ENCODE measurements at regions of chr12 and their contacts with region 1.

Region 1: DNA sequence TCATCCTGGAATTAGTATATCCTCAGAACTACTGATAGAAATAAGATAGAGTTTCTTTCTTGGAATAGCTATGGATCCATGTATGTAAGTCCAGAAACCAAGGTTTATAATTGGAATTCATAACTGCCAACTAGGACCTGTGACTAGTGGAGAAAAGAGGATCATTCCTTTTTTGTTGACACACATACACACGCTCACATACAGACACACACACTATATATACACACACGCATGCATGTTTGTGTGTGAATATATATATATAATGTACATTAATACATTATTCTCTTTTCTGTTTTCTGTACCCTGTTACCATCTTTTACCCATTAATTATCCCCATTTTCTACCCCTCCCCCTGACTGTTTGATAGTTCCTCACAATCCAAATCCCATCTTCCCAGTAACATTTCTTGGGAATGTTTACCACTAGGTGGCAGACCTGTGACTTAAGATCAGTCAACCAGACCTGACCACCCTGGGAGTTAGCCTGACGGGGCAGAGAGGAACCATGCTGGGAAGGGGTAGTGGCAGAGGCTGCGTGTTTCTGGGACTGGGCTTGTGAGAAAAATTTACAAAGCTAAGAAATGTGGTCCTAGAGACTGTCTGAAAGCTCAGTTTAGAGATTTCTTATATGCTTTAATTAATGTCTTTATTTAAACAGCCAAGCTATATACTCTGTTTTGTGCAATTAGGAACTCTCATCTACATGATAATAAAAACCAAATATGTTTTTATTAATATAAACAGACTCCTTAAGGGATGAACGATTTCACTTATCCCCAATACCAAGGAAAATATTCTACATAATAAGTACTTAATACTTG is 308.0 kb downstream of the PPFIA2 start:
- DNase-seq: peak in 3 of 10 donors; percentile 28 to 43 (median 39)
- H3K4me3 ChIP-seq: peak overlapping the region in 7 of 59 donors; percentile 1 to 44 (median 18)
- H3K27ac ChIP-seq: peak overlapping the region in 1 of 59 donors; percentile 18
- H3K27me3 ChIP-seq: no peaks in the 10 kb centered on the region
- CTCF ChIP-seq: peak; percentile 42 to 79 (median 66)

Region 2: DNA sequence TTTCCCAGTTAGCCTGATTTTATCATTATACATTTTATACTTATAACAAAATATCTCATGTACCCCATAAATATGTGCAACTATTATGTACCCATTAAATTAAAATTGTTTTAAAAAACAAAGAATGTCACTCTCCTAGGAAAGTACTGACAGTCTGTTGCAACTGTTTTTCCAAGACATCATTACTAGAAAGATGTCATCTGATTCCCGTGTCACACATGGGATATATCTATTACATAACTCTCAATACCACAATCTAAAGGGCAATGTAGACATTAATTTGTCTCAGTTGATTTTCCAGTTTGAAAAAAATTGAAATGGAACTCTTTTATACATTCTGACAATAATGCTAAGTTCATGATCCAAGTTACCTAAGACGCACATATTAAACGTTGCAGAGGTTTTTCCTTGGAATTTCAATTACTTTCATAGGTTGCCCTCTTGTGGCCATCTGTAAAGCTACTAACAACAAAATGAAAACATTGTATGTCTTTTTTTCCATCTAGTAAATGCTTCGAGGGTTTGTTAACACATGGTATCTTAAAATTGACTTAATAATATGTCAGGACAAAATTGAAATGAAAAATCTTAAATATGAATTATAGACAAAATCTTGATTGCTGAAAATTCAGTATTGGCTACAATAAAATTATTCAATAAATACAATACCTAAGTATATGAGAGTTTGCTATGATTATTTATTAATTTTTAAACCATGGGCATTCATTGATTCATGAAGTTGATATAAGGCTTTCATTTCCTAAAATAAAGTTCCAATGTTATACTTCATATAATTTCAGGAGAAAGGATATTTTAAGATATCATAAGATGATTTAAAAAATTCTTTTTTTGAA is 176.4 kb after region 1 on chr12:
- intact Hi-C with region 1: loop called in 1 of 2 experiments (anchors 10 kb)
- DNase-seq: peak in 1 of 10 donors; percentile 13
- H3K4me3 ChIP-seq: peak overlapping the region in 53 of 59 donors; percentile 1 to 59 (median 40)
- H3K27ac ChIP-seq: no peak overlapping the region
- H3K27me3 ChIP-seq: no peaks in the 10 kb centered on the region
- CTCF ChIP-seq: peak; percentile 59 to 94 (median 82)